AG04449 (cell line): ENCODE measurements at regions of chr3 and their contacts with region 1.

Region 1: GRCh38 chr3:13657660-13658435 is 108.9 kb downstream of the FBLN2 start:
- DNase-seq: no peak
- H3K4me3 ChIP-seq: no peak overlapping the region
- CTCF ChIP-seq: peak; percentile 96

Region 2: DNA sequence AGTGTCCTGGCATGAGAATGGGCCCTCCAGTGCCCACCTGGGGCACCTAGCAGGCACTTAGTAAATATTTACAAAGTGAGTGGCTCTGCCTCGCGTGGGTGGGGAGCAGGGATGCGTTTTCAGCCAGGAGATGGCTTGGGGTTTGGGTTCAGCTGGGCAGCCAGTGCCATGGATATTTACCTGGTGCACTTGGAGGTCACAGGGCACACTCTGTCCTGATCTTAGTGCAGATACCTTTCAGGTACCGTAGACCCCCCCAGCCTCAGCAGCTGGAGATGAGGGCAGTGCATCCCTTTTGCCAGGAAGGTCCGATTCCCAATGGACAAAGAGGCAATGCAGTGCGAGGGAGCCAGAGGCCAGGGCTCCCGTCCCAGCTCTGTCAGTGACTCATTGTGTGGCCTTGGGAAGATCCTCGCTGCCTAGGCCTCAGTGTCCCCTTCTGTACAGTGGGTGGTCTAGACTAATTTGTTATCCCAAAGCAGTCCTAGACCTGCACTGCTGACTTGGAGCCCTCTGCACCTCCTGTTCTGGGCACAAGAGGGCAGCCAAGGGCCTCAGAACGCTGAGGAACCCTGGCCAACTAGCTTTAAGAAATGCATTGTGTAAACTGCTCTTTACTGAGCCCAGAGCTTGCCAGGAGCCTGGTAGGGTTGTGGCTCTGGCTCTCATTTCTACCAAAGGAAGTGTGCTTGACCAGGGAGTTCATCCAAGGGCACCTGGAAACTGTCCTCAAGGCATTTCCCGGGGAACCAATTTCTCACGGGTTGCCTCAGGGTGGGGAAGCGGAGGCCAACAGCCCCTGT is 161.7 kb before region 1 on chr3:
- CTCF ChIA-PET with region 1: interaction called, 1,252 read pairs
- POLR2A ChIA-PET with region 1: no interaction called
- DNase-seq: peak; percentile 21
- H3K4me3 ChIP-seq: no peak overlapping the region
- CTCF ChIP-seq: peak; percentile 95

Region 3: DNA sequence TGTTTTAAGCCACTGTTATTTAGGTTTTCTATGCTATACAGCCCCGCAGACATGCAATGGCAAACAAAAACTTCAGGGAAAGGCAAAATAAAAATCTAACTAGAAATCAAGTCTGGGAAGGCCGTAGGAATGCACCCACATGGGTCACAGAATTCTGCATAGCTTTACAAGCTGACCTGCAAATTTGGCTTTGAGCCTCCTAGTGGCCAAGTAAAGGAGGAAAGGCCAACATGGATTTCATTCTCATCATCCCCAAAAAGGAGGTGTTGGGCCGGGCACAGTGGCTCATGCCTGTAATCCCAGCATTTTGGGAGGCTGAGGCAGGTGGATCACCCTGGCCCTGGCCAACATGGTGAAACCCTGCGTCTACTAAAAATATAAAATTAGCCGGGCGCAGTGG is 15.4 kb after region 1 on chr3:
- CTCF ChIA-PET with region 1: interaction called, 58 read pairs
- POLR2A ChIA-PET with region 1: no interaction called
- DNase-seq: no peak
- H3K4me3 ChIP-seq: no peak overlapping the region
- CTCF ChIP-seq: no peak

Region 4: DNA sequence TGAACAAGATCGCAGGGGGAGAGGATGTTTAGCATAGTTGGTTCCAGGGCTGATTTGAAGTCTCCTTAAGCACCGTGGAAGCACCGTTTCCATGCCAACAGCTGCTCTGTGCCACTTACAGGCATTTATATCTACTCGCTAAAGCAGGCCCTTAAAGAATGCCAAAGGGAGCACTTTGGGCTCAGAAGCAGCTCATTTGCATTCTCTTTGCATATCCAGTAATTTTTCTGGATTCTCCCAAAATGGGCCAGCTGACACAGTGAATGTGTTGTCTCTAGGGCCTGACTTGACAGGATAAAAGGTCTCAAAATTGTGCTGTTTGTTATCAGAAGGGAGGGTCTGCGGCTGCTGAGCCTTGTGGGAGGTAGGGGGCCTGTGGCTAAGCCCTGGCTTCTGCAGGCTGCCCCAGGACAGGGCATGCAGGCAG is 29.7 kb after region 1 on chr3:
- CTCF ChIA-PET with region 1: interaction called, 13 read pairs
- POLR2A ChIA-PET with region 1: no interaction called
- DNase-seq: no peak
- H3K4me3 ChIP-seq: no peak overlapping the region
- CTCF ChIP-seq: no peak

Region 5: DNA sequence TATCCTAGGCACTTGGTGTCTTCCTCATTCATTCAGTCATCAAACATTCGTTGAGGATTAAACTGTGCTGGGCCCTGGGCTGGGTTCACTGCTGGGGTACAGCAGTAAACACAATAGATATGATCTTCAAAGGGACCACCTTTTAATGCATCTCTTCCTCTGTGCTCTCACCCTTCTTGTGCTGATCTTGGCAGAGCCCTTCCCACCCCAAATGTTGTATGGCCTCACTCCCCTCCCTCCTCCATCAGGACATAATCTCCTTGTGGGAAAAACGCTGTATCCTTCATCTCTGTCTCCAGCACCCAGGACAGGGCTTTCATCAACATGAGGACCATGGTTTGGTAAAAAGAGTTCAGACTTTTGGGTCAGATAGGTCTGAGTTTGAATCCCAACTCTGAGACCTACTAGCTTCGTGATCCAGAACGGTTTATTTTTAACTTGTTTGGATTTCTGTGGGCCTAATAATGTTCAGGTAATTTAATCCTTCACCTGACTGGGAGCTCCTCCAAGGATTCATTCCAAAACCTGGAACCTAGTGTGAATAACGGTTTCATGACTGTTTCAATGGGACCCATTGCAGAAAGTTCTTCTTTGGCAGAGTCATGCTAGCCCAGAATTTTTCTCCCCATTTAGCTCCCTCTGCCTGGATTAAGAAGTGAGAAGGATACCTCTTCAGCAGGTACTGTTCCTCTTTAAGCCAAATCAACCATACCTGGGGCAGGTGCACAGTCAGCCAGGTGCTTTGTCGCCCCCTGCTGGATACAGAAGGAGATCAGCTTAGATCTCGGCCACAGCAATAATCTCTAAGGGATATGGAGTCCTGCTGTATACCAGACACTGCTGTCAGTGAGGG is 227.2 kb after region 1 on chr3:
- CTCF ChIA-PET with region 1: interaction called, 20 read pairs
- POLR2A ChIA-PET with region 1: no interaction called
- DNase-seq: no peak
- H3K4me3 ChIP-seq: no peak overlapping the region
- CTCF ChIP-seq: peak; percentile 21

Region 6: DNA sequence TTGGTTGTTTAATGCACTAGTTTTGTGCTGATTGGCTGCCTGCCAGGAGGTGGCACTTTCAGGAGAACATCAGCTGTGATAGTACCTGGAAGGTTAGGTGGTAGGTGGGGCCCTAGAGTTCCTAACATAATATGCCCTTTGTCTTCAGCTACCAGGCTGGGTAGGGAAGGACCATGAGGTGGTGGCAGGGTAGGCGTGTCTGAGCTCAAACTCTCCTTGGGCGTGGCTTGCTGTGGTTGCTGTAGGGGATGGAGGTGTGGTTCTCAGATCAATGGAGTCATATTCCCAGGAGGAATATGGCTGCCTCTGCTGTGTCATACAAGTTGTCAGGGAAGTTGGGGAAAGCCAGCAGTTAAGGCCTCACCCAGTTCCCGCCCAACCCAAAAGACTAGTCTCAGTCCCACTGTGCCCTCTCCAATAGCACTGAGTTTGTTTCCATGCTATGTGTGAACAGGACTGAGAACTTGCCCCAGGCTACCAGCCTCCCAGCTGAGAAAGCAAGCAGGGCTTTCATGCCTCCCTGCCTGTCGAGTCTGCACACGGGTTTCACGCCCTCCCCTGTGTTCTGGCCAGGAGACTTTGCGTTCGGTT is 359.1 kb after region 1 on chr3:
- CTCF ChIA-PET with region 1: no interaction called
- POLR2A ChIA-PET with region 1: no interaction called
- DNase-seq: no peak
- H3K4me3 ChIP-seq: no peak overlapping the region
- CTCF ChIP-seq: no peak

Region 7: DNA sequence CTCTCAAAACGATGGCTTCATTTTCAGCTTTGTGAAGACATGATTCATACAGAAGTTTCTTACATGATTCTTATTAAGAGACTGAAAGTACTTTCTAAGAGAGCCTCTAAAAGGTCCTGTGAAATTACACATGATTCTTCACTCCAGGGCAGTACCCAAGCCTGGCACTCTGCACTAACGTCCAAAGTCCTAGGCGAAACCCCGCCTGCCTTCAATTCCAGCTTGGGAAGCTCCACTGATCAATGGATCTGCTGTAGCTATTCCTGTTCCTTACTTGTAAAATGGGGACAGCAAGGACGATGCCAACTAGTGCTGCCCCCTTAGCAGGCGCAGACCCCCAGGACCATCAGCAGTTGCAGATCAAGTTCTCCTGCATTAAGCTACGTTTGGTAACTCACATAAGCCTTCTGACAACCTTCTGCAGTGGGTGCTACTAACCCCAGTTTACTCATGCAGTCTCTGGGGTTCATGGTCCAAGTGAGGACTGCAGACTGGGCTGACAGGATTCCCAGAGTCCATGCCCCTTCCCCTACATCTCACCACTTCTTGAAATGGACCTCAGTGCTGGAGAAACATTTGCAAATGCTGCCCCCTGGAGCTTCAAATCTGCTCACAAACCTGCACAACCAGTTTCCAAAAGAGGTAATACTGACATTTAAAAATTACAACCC is 456.3 kb after region 1 on chr3:
- CTCF ChIA-PET with region 1: interaction called, 18 read pairs
- POLR2A ChIA-PET with region 1: no interaction called
- DNase-seq: no peak
- H3K4me3 ChIP-seq: no peak overlapping the region
- CTCF ChIP-seq: no peak